Naive thymus-derived CD4-positive, alpha-beta T cell (primary cell): ENCODE measurements at regions of chr7 and their contacts with region 1.

Region 1: GRCh38 chr7:28078036-28078901 is 102.3 kb downstream of the JAZF1 start:
- DNase-seq: peak in 7 of 9 donors; percentile 8 to 57 (median 44)
- ATAC-seq: peak; percentile 88
- H3K4me3 ChIP-seq: no peak overlapping the region
- H3K4me3 Mint-ChIP-seq: no peak overlapping the region
- H3K27ac ChIP-seq: no peak overlapping the region
- H3K27ac Mint-ChIP-seq: no peak overlapping the region
- H3K4me1 ChIP-seq: no peaks in the 10 kb centered on the region
- H3K4me1 Mint-ChIP-seq: peaks cover 0 to 35% (median 12%) of the 10 kb centered on the region in 7 donors
- H3K27me3 ChIP-seq: no peaks in the 10 kb centered on the region
- H3K27me3 Mint-ChIP-seq: peaks cover 0 to 8% (median 0%) of the 10 kb centered on the region in 5 donors

Region 2: DNA sequence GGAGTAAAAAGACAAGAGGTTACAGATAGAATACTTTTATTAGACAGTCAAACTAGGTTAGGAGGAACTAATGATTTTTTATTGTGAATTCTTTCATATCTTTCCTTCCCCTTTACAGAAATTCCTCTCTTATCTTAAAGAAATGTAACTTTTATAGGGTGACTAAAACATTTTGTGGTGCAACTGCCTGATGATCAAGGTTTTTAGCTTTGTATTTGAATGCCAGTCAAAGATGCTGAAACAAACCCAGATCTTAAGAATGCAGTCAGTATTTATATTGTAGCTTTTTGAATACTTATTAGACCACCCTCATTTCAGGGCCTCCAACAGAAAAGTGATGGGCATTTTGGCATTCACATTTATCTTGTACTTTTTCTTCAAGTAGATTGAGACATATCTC is 310.9 kb before region 1 on chr7:
- CTCF ChIA-PET with region 1: no interaction called
- POLR2A ChIA-PET with region 1: no interaction called
- intact Hi-C with region 1: no loop called
- DNase-seq: no peak
- ATAC-seq: no peak
- H3K4me3 ChIP-seq: no peak overlapping the region
- H3K4me3 Mint-ChIP-seq: no peak overlapping the region
- H3K27ac ChIP-seq: no peak overlapping the region
- H3K27ac Mint-ChIP-seq: no peak overlapping the region
- H3K4me1 ChIP-seq: no peaks in the 10 kb centered on the region
- H3K4me1 Mint-ChIP-seq: peaks cover 0 to 63% (median 49%) of the 10 kb centered on the region in 7 donors
- H3K27me3 ChIP-seq: no peaks in the 10 kb centered on the region
- H3K27me3 Mint-ChIP-seq: no peaks in the 10 kb centered on the region

Region 3: DNA sequence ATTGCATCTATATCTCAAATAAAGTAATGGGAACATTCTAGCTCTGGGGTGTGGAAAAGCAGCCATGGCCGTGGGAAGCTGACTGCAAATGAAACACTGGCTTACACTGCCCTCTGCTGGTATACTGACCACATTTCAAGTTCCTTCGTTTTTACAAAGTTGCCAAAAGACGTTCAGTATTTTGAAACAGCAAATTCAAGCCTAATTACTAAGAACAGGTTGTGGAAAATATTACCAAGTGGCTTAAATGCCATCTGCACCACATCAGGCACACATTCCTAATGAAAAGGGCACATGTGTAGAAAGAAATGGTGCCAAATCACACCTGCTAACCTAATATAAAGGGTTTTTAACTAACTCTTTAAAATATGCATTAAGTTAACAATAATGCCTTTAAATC is 18.4 kb after region 1 on chr7:
- CTCF ChIA-PET with region 1: interaction called, 4 read pairs
- POLR2A ChIA-PET with region 1: no interaction called
- intact Hi-C with region 1: loop called in 1 of 2 experiments (anchors 1 kb)
- DNase-seq: peak in 7 of 9 donors; percentile 26 to 62 (median 47)
- ATAC-seq: peak; percentile 84
- H3K4me3 ChIP-seq: no peak overlapping the region
- H3K4me3 Mint-ChIP-seq: no peak overlapping the region
- H3K27ac ChIP-seq: no peak overlapping the region
- H3K27ac Mint-ChIP-seq: no peak overlapping the region
- H3K4me1 ChIP-seq: no peaks in the 10 kb centered on the region
- H3K4me1 Mint-ChIP-seq: peaks cover 0 to 25% (median 10%) of the 10 kb centered on the region in 7 donors
- H3K27me3 ChIP-seq: no peaks in the 10 kb centered on the region
- H3K27me3 Mint-ChIP-seq: no peaks in the 10 kb centered on the region

Region 4: GRCh38 chr7:29839302-29839701 is 1761.0 kb after region 1 on chr7:
- CTCF ChIA-PET with region 1: no interaction called
- POLR2A ChIA-PET with region 1: no interaction called
- intact Hi-C with region 1: no loop called
- DNase-seq: no peak
- ATAC-seq: no peak
- H3K4me3 ChIP-seq: no peak overlapping the region
- H3K4me3 Mint-ChIP-seq: no peak overlapping the region
- H3K27ac ChIP-seq: no peak overlapping the region
- H3K27ac Mint-ChIP-seq: no peak overlapping the region
- H3K4me1 ChIP-seq: no peaks in the 10 kb centered on the region
- H3K4me1 Mint-ChIP-seq: no peaks in the 10 kb centered on the region
- H3K27me3 ChIP-seq: peaks cover 0 to 3% of the 10 kb centered on the region in 2 donors
- H3K27me3 Mint-ChIP-seq: peaks cover 0 to 11% (median 4%) of the 10 kb centered on the region in 5 donors